ENCODE measurements at regions of chr20 and their contacts with region 1.

Region 1: DNA sequence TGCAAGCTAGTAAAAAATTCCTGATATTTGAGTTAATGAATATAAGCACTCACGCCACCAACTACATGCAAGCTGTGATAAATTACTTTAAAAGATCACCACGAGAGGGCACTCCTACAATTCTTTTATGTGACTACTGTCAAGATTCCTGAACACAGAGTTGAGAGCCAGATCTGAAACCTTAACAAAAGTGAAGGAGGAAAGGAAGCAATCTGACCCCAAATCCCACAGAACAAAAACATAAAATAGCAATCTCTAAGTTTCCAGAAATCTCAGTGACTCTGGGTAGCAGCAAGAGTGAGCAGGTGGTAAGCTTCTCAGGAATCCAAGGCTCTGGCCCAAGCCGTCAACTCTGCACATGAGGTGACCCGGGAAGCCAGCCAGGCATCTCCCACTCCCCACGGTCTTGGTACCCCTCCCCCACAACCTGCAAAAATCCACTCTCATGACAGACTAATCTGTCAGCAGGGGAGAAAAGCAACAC is 55.1 kb downstream of the STAU1 start:
- DNase-seq: no peak
- ATAC-seq: peak; percentile 59
- H3K4me3 Mint-ChIP-seq: no peak overlapping the region
- H3K27ac Mint-ChIP-seq: peak overlapping the region; percentile 67; the same call in 1 of the 2 replicates
- H3K4me1 Mint-ChIP-seq: peaks cover 5% of the 10 kb centered on the region
- H3K27me3 Mint-ChIP-seq: no peaks in the 10 kb centered on the region
- CTCF ChIP-seq: 0 out of 2 replicates have a peak, but pooled peaks have one; percentile 33

Region 2: DNA sequence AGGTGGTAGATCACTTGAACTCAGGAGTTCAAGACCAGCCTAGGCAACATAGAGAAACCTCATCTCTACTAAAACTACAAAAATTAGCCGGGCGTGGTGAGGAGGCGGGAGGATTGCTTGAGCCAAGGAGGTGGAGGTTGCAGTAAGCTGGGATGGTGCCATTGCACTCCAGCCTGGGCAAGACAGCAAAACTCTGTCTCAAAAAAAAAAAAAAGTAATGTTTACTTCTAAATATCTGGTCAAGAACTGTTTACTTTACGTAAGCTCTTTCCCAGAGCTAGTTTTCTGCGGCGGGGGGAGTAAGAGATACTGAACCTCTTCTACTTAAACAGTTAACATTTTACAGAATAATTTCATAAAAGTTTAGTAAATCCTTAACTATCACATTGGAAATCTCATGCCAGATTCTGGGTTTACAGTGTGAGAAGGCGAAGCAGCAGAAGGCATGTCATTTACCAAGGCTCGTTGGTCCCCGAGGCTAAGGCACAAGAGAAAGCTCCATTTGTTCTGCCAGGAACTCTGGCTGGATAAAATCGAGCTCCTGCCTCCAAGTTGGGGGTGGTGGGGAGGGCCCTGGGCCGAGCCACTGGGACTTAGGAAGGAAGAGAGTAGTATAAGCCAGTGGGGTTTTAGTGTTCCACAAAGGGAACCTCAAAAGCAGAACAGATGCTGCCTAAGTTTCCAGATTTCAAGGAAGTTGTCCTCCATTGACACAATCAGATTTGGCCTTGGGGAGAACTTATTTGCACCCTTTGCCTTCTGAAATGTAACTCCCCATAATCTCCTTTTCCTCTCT is 169.9 kb before region 1 on chr20:
- CTCF ChIA-PET with region 1: no interaction called
- POLR2A ChIA-PET with region 1: no interaction called
- DNase-seq: no peak
- ATAC-seq: no peak
- H3K4me3 Mint-ChIP-seq: no peak overlapping the region
- H3K27ac Mint-ChIP-seq: 0 out of 2 replicates have a peak overlapping the region, but pooled peaks have one; percentile 41
- H3K4me1 Mint-ChIP-seq: no peaks in the 10 kb centered on the region
- H3K27me3 Mint-ChIP-seq: no peaks in the 10 kb centered on the region
- CTCF ChIP-seq: no peak

Region 3: GRCh38 chr20:49179368-49180277 is 46.6 kb after region 1 on chr20:
- CTCF ChIA-PET with region 1: interaction called, 10 read pairs
- POLR2A ChIA-PET with region 1: no interaction called
- DNase-seq: no peak
- ATAC-seq: no peak
- H3K4me3 Mint-ChIP-seq: no peak overlapping the region
- H3K27ac Mint-ChIP-seq: peak overlapping the region; percentile 82
- H3K4me1 Mint-ChIP-seq: peaks cover 37% of the 10 kb centered on the region
- H3K27me3 Mint-ChIP-seq: no peaks in the 10 kb centered on the region
- CTCF ChIP-seq: no peak

Measured in WTC11 (cell line).